Naive thymus-derived CD4-positive, alpha-beta T cell (primary cell): ENCODE measurements at regions of chr2 and their contacts with region 1.

Region 1: GRCh38 chr2:23452853-23453420 is 68.0 kb downstream of the KLHL29 start:
- DNase-seq: peak in 7 of 9 donors; percentile 55 to 74 (median 69)
- ATAC-seq: peak; percentile 83
- H3K4me3 ChIP-seq: peak overlapping the region; percentile 22
- H3K4me3 Mint-ChIP-seq: peak overlapping the region; percentile 46 to 85 (median 77)
- H3K27ac ChIP-seq: no peak overlapping the region
- H3K27ac Mint-ChIP-seq: peak overlapping the region; percentile 48 to 91 (median 78)
- H3K4me1 ChIP-seq: peaks cover 9 to 29% of the 10 kb centered on the region in 2 donors
- H3K4me1 Mint-ChIP-seq: peaks cover 18 to 48% (median 41%) of the 10 kb centered on the region in 7 donors
- H3K27me3 ChIP-seq: no peaks in the 10 kb centered on the region
- H3K27me3 Mint-ChIP-seq: peaks cover 4 to 17% (median 6%) of the 10 kb centered on the region in 5 donors

Region 2: DNA sequence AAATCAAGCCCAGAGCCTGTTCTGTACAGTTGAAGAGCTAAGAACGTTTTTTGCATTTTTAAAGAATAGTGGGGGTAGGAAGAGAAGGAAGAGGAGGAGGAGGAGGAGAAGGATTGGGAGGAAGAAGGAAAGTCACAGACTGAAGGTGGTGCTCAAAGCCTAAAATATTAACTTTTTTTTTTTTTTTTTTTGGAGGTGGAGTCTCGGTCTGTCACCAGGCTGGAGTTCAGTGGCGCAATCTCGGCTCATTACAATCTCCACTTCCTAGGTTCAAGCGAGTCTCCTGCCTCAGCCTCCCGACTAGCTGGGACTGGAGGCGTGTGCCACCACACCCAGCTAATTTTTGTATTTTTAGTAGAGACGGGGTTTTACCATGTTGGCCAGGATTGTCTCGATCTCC is 86.2 kb before region 1 on chr2:
- CTCF ChIA-PET with region 1: no interaction called
- POLR2A ChIA-PET with region 1: no interaction called
- intact Hi-C with region 1: loop called in 1 of 2 experiments (anchors 5 kb)
- DNase-seq: peak in 1 of 9 donors; percentile 8
- ATAC-seq: no peak
- H3K4me3 ChIP-seq: no peak overlapping the region
- H3K4me3 Mint-ChIP-seq: no peak overlapping the region
- H3K27ac ChIP-seq: no peak overlapping the region
- H3K27ac Mint-ChIP-seq: no peak overlapping the region
- H3K4me1 ChIP-seq: no peaks in the 10 kb centered on the region
- H3K4me1 Mint-ChIP-seq: peaks cover 0 to 5% (median 2%) of the 10 kb centered on the region in 7 donors
- H3K27me3 ChIP-seq: no peaks in the 10 kb centered on the region
- H3K27me3 Mint-ChIP-seq: peaks cover 12 to 51% (median 35%) of the 10 kb centered on the region in 5 donors

Region 3: DNA sequence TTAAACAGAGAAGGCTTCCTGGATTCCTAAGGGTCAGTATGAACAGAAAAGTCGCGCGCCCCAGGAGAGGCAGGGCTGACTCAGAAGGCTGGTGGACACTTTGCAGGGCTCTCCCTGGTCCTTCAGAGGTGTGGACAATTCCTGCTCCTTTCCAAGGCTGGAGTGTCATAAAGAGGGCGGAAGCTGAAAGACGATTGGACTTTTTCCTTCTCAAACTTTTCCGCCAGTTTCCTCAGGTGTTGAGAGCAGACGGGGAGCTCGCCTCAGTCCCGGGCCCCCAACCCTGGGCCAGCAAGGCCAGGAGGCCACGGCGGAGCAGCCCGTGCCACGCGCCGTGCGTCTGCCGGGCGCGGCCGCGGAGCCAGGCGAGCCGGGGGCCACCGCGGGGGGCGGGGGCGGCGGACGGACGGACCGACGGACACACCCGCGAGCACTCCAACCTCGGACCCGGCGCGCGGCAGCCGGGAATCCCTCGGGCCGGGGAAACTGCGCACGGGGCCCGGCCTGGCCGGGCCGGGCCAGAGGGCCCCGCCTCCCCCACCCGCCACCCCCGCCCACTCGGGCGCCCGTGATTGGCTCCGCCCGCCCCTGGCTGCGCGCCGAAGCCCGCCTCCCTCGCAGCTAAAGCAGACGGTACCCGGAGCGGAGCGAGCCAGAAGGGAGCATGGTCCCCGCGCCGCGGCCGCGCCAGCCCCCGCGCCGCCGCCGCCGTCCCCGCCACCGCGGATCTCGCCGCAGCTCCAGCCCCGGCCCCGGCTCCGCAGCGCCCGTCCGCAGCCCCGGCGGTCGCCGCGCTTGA is 68.2 kb before region 1 on chr2 and contains the start of gene KLHL29:
- CTCF ChIA-PET with region 1: no interaction called
- POLR2A ChIA-PET with region 1: no interaction called
- intact Hi-C with region 1: loop called (anchors 2 to 5 kb)
- DNase-seq: peak; percentile 56 to 79 (median 72)
- ATAC-seq: peak; percentile 88
- H3K4me3 ChIP-seq: peak within 1 kb of the TSS; percentile 46
- H3K4me3 Mint-ChIP-seq: peak within 1 kb of the TSS; percentile 85 to 97 (median 90)
- H3K27ac ChIP-seq: no peak within 1 kb of the TSS
- H3K27ac Mint-ChIP-seq: peak within 1 kb of the TSS in 8 of 9 donors; percentile 76 to 96 (median 84)
- H3K4me1 ChIP-seq: peaks cover 0 to 24% of the 10 kb centered on the region in 2 donors
- H3K4me1 Mint-ChIP-seq: peaks cover 17 to 41% (median 35%) of the 10 kb centered on the region in 7 donors
- H3K27me3 ChIP-seq: peaks cover 0 to 2% of the 10 kb centered on the region in 2 donors
- H3K27me3 Mint-ChIP-seq: peaks cover 23 to 77% (median 40%) of the 10 kb centered on the region in 5 donors
- total RNA-seq, gene KLHL29: 5.4 to 6.5 (median 6.2) TPM

Region 4: GRCh38 chr2:23465936-23466335 is 13.0 kb after region 1 on chr2:
- CTCF ChIA-PET with region 1: no interaction called
- POLR2A ChIA-PET with region 1: no interaction called
- intact Hi-C with region 1: no loop called
- DNase-seq: no peak
- ATAC-seq: no peak
- H3K4me3 ChIP-seq: no peak overlapping the region
- H3K4me3 Mint-ChIP-seq: no peak overlapping the region
- H3K27ac ChIP-seq: no peak overlapping the region
- H3K27ac Mint-ChIP-seq: no peak overlapping the region
- H3K4me1 ChIP-seq: no peaks in the 10 kb centered on the region
- H3K4me1 Mint-ChIP-seq: peaks cover 0 to 6% (median 0%) of the 10 kb centered on the region in 7 donors
- H3K27me3 ChIP-seq: no peaks in the 10 kb centered on the region
- H3K27me3 Mint-ChIP-seq: peaks cover 23 to 53% (median 36%) of the 10 kb centered on the region in 5 donors